Activated CD8-positive, alpha-beta memory T cell treated with anti-CD3 and anti-CD28 coated beads, Interleukin-2, amount 10 ng/mL, durations not matched to agents 7 days and 5 days (primary cell): ENCODE measurements at regions of chr3 and their contacts with region 1.

Region 1: DNA sequence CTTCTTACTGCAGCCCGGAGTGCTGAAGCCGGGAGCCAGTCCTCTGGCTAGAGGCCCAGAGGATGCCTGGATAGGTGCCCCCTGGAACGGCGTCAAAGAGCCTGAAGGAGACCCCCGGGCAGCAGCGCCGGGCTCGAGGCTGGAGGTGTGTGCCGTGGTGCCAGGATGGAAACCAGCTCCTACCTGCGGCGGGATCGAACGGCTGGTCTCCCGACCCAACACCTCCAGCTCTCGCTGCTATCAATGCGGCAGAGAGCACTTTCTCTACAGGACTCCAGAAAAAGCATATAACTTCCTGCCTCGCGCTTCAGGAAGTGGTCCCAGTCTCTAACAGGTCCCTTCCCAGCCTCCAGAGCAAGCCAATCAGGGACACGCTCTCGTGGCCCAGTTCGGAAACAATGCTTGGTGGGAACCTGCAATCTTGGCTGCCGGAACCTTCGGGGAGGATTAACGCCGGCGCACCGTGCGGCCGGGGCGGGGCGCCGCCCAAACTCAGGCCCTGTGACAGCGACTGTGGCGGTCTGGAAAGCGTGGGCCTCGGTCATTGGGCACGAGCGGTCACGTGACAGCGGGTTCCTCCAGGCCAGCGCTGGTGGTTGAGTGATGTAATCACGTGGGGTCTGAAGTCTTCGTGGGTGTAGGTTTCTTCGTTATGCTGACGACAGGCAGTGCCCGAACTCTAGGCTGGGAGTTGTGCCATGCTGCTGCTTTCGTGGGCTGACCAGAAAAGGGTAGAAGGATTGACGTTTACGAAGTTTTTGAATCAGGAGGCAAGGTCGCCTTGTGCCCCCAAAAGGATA is at the start of gene SLC33A1:
- DNase-seq: peak; percentile 99
- ATAC-seq: peak; percentile 93
- H3K4me3 Mint-ChIP-seq: peak within 1 kb of the TSS; percentile 89
- H3K27ac Mint-ChIP-seq: peak within 1 kb of the TSS; percentile 99
- H3K4me1 Mint-ChIP-seq: peaks cover 41% of the 10 kb centered on the region
- H3K27me3 Mint-ChIP-seq: no peaks in the 10 kb centered on the region
- total RNA-seq, gene SLC33A1: 24.1 to 24.4 TPM

Region 2: GRCh38 chr3:155727558-155728242 is 126.6 kb before region 1 on chr3:
- CTCF ChIA-PET with region 1: no interaction called
- DNase-seq: no peak
- ATAC-seq: no peak
- H3K4me3 Mint-ChIP-seq: no peak overlapping the region
- H3K27ac Mint-ChIP-seq: no peak overlapping the region
- H3K4me1 Mint-ChIP-seq: no peaks in the 10 kb centered on the region
- H3K27me3 Mint-ChIP-seq: peaks cover 19% of the 10 kb centered on the region

Region 3: DNA sequence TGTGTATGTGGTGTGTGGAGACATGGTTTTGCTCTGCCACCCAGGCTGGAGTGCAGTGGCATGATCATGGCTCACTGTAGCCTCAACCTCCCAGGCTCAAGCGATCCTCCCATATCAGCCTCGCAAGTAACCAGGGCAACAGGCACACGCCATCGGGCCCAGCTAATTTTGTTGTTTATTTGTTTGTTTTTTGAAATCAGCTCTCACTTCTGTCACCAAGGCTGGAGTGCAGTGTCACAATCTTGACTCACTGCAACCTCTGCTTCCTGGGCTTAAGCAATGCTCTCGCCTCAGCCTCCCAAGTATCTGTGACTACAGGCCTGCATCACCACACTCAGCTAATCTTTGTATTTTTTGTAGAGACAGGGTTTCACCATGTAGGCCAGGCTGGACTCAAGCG is 83.2 kb before region 1 on chr3:
- CTCF ChIA-PET with region 1: no interaction called
- DNase-seq: no peak
- ATAC-seq: no peak
- H3K4me3 Mint-ChIP-seq: no peak overlapping the region
- H3K27ac Mint-ChIP-seq: no peak overlapping the region
- H3K4me1 Mint-ChIP-seq: peaks cover 2% of the 10 kb centered on the region
- H3K27me3 Mint-ChIP-seq: no peaks in the 10 kb centered on the region

Region 4: GRCh38 chr3:155870133-155870944 is 16.0 kb after region 1 on chr3 and contains the start of gene GMPS:
- CTCF ChIA-PET with region 1: interaction called, 17 read pairs
- DNase-seq: peak; percentile 96
- ATAC-seq: peak; percentile 91
- H3K4me3 Mint-ChIP-seq: peak within 1 kb of the TSS; percentile 93
- H3K27ac Mint-ChIP-seq: peak within 1 kb of the TSS; percentile 94
- H3K4me1 Mint-ChIP-seq: peaks cover 30% of the 10 kb centered on the region
- H3K27me3 Mint-ChIP-seq: no peaks in the 10 kb centered on the region
- total RNA-seq, gene GMPS: 96.9 to 104 TPM

Region 5: DNA sequence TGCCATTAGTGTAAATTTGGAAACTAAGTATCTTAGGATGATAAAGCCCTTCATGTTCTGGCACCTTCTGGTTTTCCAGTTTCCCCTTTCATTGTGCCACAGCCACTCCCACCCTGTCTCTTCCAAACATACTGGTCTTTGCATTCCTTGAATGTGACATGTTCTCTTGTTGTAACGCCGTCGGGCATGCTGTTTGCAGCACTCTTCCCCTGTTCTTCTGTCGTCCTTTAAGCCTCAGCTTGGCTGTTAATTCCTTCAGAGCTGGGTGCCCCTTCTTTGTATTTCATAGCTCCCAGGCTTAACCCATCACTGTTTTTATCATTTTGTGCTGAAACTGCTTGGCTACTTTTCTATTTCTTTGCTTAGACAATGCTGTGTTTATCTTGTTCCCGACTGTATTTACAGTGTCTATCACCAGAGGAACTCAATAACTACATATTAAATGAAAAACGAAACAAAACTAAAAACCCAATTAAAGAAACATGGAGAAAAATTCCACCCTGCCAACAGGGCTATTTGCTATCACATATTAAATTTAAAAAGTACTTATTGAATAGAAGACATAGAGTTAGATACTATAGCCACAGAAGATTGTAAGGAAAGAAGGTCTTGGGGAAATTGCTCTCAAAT is 170.7 kb after region 1 on chr3:
- CTCF ChIA-PET with region 1: no interaction called
- DNase-seq: no peak
- ATAC-seq: no peak
- H3K4me3 Mint-ChIP-seq: no peak overlapping the region
- H3K27ac Mint-ChIP-seq: no peak overlapping the region
- H3K4me1 Mint-ChIP-seq: no peaks in the 10 kb centered on the region
- H3K27me3 Mint-ChIP-seq: peaks cover 13% of the 10 kb centered on the region